CD4-positive, alpha-beta T cell (primary cell): ENCODE measurements at regions of chr5 and their contacts with region 1.

Region 1: GRCh38 chr5:122999945-123000563 is 36.5 kb downstream of the PPIC start:
- DNase-seq: peak in 6 of 14 experiments; percentile 2 to 55 (median 28)
- ATAC-seq: no peak
- H3K4me3 ChIP-seq: no peak overlapping the region
- H3K4me3 Mint-ChIP-seq: no peak overlapping the region
- H3K27ac ChIP-seq: no peak overlapping the region
- H3K27ac Mint-ChIP-seq: no peak overlapping the region
- H3K4me1 ChIP-seq: no peaks in the 10 kb centered on the region
- H3K4me1 Mint-ChIP-seq: no peaks in the 10 kb centered on the region
- H3K27me3 ChIP-seq: no peaks in the 10 kb centered on the region
- H3K27me3 Mint-ChIP-seq: no peaks in the 10 kb centered on the region
- CTCF ChIP-seq: peak; percentile 30

Region 2: GRCh38 chr5:122704243-122705036 is 295.6 kb before region 1 on chr5:
- CTCF ChIA-PET with region 1: no interaction called
- POLR2A ChIA-PET with region 1: no interaction called
- intact Hi-C with region 1: loop called in 1 of 2 experiments (anchors 10 kb)
- DNase-seq: peak in 3 of 14 experiments; percentile 22 to 31 (median 26)
- ATAC-seq: no peak
- H3K4me3 ChIP-seq: no peak overlapping the region
- H3K4me3 Mint-ChIP-seq: no peak overlapping the region
- H3K27ac ChIP-seq: no peak overlapping the region
- H3K27ac Mint-ChIP-seq: no peak overlapping the region
- H3K4me1 ChIP-seq: no peaks in the 10 kb centered on the region
- H3K4me1 Mint-ChIP-seq: no peaks in the 10 kb centered on the region
- H3K27me3 ChIP-seq: no peaks in the 10 kb centered on the region
- H3K27me3 Mint-ChIP-seq: peaks cover 5% of the 10 kb centered on the region
- CTCF ChIP-seq: peak; percentile 65